ENCODE measurements at regions of chr3 and their contacts with region 1.

Region 1: GRCh38 chr3:66407611-66408218 is 93.1 kb downstream of the LRIG1 start:
- DNase-seq: peak; percentile 71 to 91
- ATAC-seq: peak; percentile 75
- H3K4me3 ChIP-seq: no peak overlapping the region
- H3K27ac ChIP-seq: peak overlapping the region in 1 of 2 donors; percentile 90
- H3K4me1 ChIP-seq: no peaks in the 10 kb centered on the region
- H3K27me3 ChIP-seq: no peaks in the 10 kb centered on the region

Region 2: GRCh38 chr3:66442254-66443117 is 34.8 kb after region 1 on chr3:
- intact Hi-C with region 1: loop called in 1 of 2 experiments (anchors 5 kb)
- DNase-seq: peak in 1 of 2 donors; percentile 70
- ATAC-seq: peak; percentile 82
- H3K4me3 ChIP-seq: no peak overlapping the region
- H3K27ac ChIP-seq: peak overlapping the region; percentile 66 to 73
- H3K4me1 ChIP-seq: peaks cover 7% of the 10 kb centered on the region in 2 donors
- H3K27me3 ChIP-seq: no peaks in the 10 kb centered on the region

Region 3: DNA sequence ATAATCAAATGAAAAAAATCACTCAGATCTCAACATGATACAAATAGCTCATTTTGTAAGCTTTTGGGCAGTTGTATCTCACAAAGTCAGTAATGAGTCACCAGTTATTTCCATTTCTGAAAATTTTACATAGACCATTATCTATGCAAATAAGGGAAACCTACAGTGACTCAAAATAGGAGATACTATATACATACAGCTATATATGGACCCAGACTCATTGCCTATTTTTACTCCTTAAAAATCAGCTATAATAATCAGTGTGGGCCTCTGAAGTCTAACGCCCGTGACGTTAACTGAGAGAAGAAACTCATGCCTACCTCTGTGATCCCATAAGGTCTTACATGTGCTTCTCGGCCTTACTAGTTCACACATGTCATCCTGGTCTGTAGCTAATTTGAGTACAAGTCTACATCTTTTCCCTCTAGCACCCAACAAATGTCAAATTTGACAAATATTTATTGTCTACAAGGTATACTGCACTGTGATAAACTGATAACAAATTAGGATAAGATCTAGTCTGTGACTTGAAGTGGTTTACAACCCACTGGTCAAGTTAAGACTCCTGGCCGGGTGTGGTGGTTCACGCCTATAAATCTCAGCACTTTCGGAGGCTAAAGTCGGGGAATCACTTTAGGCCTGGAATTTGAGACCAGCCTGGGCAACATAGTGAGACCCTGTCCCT is 61.6 kb after region 1 on chr3:
- intact Hi-C with region 1: no loop called
- DNase-seq: no peak
- ATAC-seq: no peak
- H3K4me3 ChIP-seq: no peak overlapping the region
- H3K27ac ChIP-seq: no peak overlapping the region
- H3K4me1 ChIP-seq: peaks cover 0 to 8% of the 10 kb centered on the region in 2 donors
- H3K27me3 ChIP-seq: no peaks in the 10 kb centered on the region

Region 4: DNA sequence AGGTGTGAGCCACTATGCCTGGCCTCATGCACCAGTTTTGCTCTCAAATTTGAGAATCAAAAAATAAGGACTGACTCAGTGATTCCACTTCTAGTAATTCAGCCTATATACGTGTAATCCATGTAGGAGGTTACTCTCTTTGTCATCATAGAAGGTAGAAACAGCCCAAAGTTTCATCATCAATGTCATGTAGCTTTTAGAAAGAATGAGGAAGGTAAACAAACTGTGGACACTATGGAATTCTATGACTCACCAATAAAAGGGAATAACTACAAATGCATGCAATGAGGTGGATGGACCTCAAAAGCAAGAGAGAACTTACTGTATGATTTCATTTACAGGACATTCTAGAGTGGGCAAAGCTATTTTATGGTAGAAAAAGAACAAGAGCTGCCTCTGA is 186.2 kb after region 1 on chr3:
- intact Hi-C with region 1: loop called in 1 of 2 experiments (anchors 10 kb)
- DNase-seq: no peak
- ATAC-seq: no peak
- H3K4me3 ChIP-seq: no peak overlapping the region
- H3K27ac ChIP-seq: no peak overlapping the region
- H3K4me1 ChIP-seq: peaks cover 2 to 4% of the 10 kb centered on the region in 2 donors
- H3K27me3 ChIP-seq: no peaks in the 10 kb centered on the region

Region 5: DNA sequence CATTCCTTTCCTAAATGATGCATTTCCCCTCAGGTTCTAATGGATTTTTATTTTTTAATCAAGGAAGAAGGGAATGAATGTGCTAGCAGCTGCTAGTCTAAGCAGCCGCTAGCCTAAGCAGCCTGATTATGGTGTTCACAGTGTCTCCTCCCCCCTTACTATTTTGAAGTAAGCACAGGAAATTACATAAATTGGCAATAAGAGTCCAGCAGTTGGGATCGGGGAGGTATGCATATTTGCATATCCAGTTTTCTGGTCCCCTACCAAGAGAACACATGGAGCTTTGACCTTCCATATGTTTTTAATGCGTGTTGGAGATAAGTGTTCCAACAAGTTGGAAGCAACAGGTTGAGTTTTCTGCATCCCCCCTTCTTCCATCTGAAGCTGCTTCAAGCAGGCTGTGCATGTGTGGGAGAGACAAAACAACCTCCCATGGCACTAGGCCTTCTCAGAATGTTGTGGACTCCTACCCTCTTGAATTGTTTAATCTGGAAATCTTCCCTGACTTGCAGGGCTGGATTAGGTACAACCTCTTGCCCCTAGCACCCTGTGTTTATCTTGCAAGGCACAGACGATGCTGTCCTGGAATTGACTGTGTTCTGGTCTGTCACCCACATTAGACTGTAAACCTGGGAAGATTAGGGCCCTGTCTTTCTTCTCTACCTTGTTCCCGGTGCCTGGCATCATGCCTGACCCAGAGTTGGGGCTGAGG is 217.9 kb after region 1 on chr3:
- intact Hi-C with region 1: loop called in 1 of 2 experiments (anchors 10 kb)
- DNase-seq: no peak
- ATAC-seq: no peak
- H3K4me3 ChIP-seq: no peak overlapping the region
- H3K27ac ChIP-seq: peak overlapping the region in 1 of 2 donors; percentile 20
- H3K4me1 ChIP-seq: peaks cover 0 to 5% of the 10 kb centered on the region in 2 donors
- H3K27me3 ChIP-seq: no peaks in the 10 kb centered on the region